Caki2 (cell line): ENCODE measurements at regions of chr3 and their contacts with region 1.

Region 1: GRCh38 chr3:187739561-187740332 is 5.5 kb downstream of the BCL6 start:
- DNase-seq: peak; percentile 88

Region 2: DNA sequence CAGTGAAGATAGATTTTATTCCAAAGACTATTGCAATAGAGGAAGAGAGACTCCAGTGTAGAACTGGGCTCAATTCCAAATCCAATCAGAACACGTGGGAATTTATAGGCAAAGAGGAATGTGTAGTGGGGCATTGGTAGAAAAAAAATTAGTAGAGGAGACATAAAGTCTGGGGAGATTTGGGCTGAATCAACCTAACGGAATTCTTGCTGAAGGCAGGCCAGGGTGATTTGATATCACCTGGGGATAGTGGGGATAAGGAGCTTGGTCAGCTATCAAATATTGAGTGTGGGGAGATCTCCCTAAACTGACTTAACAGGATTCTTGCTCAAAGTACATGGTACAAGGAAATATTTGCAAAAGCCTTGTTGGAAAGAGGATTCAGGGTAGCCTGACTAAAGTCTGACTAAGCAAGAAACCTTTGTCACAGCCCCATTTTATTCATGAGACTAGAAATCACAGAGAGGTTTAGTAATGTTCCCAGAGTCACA is 99.1 kb before region 1 on chr3:
- in situ Hi-C with region 1: no loop called
- DNase-seq: peak; percentile 11

Region 3: GRCh38 chr3:187870360-187871203 is 130.8 kb after region 1 on chr3:
- in situ Hi-C with region 1: no loop called
- DNase-seq: no peak

Region 4: GRCh38 chr3:188954590-188955208 is 1215.0 kb after region 1 on chr3:
- in situ Hi-C with region 1: loop called (anchors 5 kb)
- DNase-seq: peak; percentile 67